ENCODE measurements at regions of chr1 and their contacts with region 1.

Region 1: DNA sequence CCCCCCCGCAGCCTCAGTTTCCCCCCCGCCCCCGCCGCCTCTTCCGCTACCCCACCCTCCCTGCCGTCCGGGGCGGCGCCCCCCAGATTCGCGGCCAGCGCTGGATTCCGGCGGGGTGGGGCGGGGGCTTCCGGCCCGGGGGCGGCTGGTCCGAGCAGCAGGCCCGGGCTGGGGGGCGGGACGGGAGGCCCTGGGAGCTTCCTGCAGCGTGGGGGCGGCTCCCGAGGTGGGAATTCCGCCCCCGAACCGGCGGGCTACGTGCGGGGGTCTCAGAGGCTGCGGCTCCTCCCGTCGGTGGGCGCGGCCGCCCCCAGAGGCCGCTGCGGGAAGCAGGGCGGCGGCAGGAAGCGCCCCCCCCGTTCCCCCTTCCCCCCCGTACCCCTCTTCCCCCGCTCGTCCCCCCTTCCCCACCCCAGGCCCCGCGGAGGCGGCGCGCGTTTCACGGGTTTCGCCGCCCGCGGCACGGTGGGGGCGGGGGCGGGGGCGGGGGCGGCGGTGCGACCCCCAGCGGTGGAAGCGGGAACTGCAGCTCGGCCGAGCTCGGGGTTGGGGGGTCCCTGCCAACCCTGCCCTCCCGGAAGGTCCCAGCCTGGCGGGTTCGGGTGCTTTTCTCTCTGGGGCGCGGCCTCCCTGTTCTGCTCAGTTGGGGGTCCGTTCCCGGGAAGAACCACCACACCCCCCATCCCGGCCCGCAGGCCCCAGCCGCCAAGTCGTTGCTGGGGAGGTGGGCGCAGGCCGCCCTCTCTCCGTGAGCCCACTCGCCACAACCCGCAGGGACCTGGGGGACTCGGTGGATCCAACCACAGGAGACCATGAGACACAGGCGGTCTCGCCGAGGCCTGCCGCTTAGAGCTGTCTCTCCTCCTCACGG is 76.3 kb downstream of the MORN1 start:
- DNase-seq: peak; percentile 81
- ATAC-seq: peak; percentile 24 to 53

Region 2: DNA sequence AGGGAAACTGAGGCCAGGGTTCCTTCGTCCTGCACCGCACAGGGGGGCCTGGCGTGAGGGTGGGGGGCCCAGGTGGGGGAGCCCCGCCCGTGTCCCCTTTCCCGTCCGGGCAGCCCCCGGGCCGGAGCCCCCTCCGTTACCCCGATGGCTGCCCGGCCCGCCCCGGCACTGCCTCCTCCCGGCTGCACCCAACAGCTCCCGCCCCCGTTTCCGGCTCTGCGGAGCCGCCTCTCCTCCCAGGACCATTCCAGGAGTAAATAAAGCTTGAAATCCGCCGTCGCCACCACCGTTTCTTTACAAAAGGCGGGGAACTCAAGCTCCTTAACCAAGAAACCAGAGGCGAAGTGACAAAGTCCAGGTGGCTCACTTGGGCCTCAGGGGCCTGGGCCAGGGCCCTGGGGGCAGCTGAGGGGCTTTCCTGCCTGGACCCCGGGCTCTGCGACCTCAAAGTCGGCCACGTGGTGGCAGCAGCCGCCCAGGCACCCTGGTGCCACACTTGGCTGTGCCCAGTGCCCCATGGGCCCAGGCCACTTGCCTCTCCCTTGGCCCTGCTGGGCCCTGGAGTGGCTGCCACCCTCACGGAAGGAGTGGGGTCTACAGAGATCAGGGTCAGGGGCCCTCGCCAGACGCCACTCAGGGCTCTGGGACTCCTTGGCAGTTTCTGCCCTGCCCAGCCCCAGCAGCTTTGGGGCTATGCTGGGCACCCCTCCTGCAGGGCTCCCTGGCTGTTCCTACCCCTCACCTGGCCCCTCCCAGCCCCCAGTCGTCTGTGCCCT is 120.0 kb before region 1 on chr1:
- intact Hi-C with region 1: loop called (anchors 5 to 10 kb)
- DNase-seq: peak; percentile 94
- ATAC-seq: peak; percentile 76 to 77

Region 3: GRCh38 chr1:2381741-2382620 is 66.9 kb after region 1 on chr1:
- intact Hi-C with region 1: loop called in 1 of 2 experiments (anchors 5 kb)
- DNase-seq: peak; percentile 89
- ATAC-seq: peak; percentile 95 to 96

Region 4: GRCh38 chr1:2406451-2407041 is 91.5 kb after region 1 on chr1:
- intact Hi-C with region 1: no loop called
- DNase-seq: no peak
- ATAC-seq: peak in 1 of 2 donors; percentile 6